ENCODE measurements at regions of chr12 and their contacts with region 1.

Region 1: GRCh38 chr12:38124247-38125012 is 192.1 kb upstream of the ALG10B start:
- DNase-seq: no peak
- H3K4me3 ChIP-seq: no peak overlapping the region
- H3K27ac ChIP-seq: peak overlapping the region in 1 of 2 donors; percentile 64
- H3K4me1 ChIP-seq: no peaks in the 10 kb centered on the region
- H3K27me3 ChIP-seq: no peaks in the 10 kb centered on the region
- CTCF ChIP-seq: no peak
- POLR2A ChIP-seq: no peak

Region 2: DNA sequence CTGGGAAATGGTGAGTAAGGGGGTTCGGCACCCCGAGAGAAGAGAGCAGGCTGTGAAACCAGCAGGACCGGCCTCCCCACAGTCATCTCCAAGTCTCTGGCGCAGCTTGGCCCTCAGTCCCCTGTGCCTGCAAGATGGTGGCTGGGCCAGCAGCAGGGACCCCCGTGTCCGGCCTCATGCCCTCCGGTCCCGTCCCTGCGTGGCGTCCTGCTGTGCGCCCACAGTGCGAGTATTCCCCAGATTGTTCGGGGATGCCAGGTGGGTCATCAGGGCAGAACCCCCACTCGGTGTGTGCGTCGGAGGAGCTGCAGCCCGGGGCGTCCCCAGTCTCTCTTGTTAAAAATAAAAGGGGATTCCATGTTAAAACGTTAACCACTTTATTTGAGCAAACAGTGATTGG is 24.7 kb before region 1 on chr12:
- intact Hi-C with region 1: no loop called
- DNase-seq: no peak
- H3K4me3 ChIP-seq: no peak overlapping the region
- H3K27ac ChIP-seq: no peak overlapping the region
- H3K4me1 ChIP-seq: no peaks in the 10 kb centered on the region
- H3K27me3 ChIP-seq: no peaks in the 10 kb centered on the region
- CTCF ChIP-seq: no peak
- POLR2A ChIP-seq: no peak

Region 3: DNA sequence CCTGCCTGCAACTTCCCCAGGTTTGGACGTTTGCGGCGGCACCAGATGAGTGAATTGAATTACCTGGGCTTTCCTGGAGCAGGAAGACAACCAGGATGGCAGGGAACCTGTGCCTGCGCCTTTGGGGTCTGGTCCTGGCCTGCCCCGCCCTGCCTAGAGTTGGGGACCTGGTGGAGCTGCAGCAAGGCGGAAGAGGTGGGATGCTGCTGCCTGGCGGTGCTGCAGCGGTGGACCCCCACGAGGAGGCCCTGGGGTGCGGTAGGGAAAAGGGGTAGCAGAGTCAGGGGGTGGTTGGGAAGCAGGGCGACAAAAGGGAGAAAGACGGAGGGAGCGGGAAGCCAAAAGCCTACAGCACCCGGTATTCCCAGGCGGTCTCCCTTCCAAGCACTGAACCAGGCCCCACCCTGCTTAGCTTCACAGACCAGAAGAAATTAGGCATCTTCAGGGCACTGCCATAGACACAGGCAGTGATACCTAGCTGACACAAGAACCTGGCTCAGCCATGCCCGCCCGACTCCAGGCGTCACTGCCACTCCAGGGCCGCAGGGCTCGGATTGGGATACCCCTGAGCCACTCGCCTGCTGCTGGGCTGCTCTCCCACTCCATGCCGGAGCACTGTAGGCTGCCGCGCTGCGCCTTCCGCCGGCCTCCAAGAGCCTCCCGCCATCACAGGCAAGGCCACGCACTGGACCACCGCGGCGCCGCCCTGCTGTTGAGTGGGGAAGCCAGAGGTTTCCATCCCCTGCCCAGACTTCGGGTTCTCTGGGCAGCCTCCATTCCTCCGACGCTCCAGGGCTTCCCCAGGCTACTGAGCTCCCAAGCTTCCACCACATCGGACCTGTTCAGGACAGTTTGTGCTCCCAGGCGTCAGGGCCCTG is 36.9 kb after region 1 on chr12:
- intact Hi-C with region 1: no loop called
- DNase-seq: no peak
- H3K4me3 ChIP-seq: no peak overlapping the region
- H3K27ac ChIP-seq: no peak overlapping the region
- H3K4me1 ChIP-seq: no peaks in the 10 kb centered on the region
- H3K27me3 ChIP-seq: peaks cover 0 to 6% of the 10 kb centered on the region in 2 donors
- CTCF ChIP-seq: no peak
- POLR2A ChIP-seq: no peak

Region 4: GRCh38 chr12:38707648-38708047 is 583.2 kb after region 1 on chr12:
- intact Hi-C with region 1: loop called (anchors 10 kb)
- DNase-seq: no peak
- H3K4me3 ChIP-seq: no peak overlapping the region
- H3K27ac ChIP-seq: no peak overlapping the region
- H3K4me1 ChIP-seq: no peaks in the 10 kb centered on the region
- H3K27me3 ChIP-seq: no peaks in the 10 kb centered on the region
- CTCF ChIP-seq: no peak
- POLR2A ChIP-seq: no peak

Region 5: GRCh38 chr12:38761636-38762342 is 637.4 kb after region 1 on chr12:
- intact Hi-C with region 1: no loop called
- DNase-seq: no peak
- H3K4me3 ChIP-seq: no peak overlapping the region
- H3K27ac ChIP-seq: no peak overlapping the region
- H3K4me1 ChIP-seq: no peaks in the 10 kb centered on the region
- H3K27me3 ChIP-seq: no peaks in the 10 kb centered on the region
- CTCF ChIP-seq: no peak
- POLR2A ChIP-seq: no peak